Activated naive CD4-positive, alpha-beta T cell treated with anti-CD3 and anti-CD28 coated beads for 36 hours (primary cell): ENCODE measurements at regions of chr3 and their contacts with region 1.

Region 1: DNA sequence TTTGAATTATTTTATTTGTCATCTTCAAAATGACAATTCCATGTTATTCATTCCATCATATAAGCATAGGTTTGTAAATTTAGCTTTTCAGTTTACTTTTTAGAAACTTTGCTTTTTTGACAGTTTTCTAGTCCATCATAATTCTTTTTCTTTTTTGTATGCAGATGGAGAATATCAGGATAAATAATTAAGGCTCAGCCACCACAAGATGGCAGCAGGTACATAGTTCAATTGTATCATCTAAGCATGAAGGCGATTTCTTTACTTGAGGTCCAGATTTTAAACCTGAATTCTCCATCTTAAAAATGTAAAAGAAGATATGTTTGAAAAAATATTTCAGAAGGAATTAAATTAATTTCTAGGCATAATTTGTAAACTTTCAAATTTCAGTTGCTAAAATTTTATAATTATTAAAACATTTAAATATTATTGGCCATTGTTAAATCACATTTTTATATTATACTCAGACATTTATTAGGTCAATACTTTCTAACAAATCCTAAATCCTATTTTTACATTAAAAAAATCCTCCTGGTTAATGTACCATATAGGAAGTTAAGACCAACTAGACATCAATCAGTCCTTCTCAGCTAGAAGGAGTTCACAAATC is 15.1 kb downstream of the PLSCR5 start:
- DNase-seq: peak; percentile 49
- H3K4me3 Mint-ChIP-seq: no peak overlapping the region
- H3K27ac Mint-ChIP-seq: no peak overlapping the region
- H3K4me1 Mint-ChIP-seq: no peaks in the 10 kb centered on the region
- H3K27me3 Mint-ChIP-seq: peaks cover 6% of the 10 kb centered on the region

Region 2: GRCh38 chr3:146218880-146219866 is 370.8 kb before region 1 on chr3:
- CTCF ChIA-PET with region 1: interaction called, 3 read pairs
- intact Hi-C with region 1: loop called (anchors 1 kb)
- DNase-seq: peak; percentile 60
- H3K4me3 Mint-ChIP-seq: no peak overlapping the region
- H3K27ac Mint-ChIP-seq: no peak overlapping the region
- H3K4me1 Mint-ChIP-seq: no peaks in the 10 kb centered on the region
- H3K27me3 Mint-ChIP-seq: peaks cover 4% of the 10 kb centered on the region

Region 3: DNA sequence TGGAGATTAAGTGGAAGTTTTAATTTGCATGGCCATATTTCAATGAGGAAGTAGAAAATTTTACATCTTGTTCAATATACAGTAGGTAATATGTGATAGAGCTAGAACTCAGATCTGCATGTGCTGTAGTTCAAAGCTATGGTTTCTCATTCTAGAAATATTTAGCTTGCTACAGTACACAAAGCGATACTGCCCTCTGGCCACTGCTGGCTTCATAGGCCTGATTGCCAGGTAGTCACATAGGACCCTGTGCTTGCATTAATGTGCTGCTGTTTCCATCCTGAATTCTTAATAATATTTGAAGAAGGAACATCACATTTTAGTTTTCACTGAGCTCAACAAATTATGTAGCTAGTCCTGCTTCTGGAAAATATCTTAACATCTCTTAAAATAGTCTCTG is 207.6 kb before region 1 on chr3:
- CTCF ChIA-PET with region 1: no interaction called
- intact Hi-C with region 1: no loop called
- DNase-seq: peak; percentile 6
- H3K4me3 Mint-ChIP-seq: no peak overlapping the region
- H3K27ac Mint-ChIP-seq: no peak overlapping the region
- H3K4me1 Mint-ChIP-seq: no peaks in the 10 kb centered on the region
- H3K27me3 Mint-ChIP-seq: peaks cover 4% of the 10 kb centered on the region

Region 4: DNA sequence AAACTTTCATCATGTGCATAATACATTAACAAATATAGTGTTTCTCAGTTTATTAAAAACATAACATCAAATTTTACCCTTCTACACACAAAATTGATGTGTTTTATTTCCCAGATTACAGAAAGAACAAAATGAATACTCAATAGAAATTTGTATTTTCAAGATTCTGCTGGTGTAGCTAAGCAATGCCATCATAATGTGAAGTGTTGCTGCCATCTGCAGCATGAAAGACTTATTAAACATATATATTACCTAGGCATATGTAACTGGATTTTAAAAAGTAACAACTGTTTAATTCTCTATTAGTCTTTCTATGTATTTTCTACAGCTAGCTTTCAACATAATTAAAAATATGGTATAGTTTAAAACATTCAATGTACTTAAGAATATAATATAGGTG is 12.3 kb before region 1 on chr3:
- CTCF ChIA-PET with region 1: no interaction called
- intact Hi-C with region 1: no loop called
- DNase-seq: peak; percentile 56
- H3K4me3 Mint-ChIP-seq: no peak overlapping the region
- H3K27ac Mint-ChIP-seq: no peak overlapping the region
- H3K4me1 Mint-ChIP-seq: no peaks in the 10 kb centered on the region
- H3K27me3 Mint-ChIP-seq: no peaks in the 10 kb centered on the region

Region 5: DNA sequence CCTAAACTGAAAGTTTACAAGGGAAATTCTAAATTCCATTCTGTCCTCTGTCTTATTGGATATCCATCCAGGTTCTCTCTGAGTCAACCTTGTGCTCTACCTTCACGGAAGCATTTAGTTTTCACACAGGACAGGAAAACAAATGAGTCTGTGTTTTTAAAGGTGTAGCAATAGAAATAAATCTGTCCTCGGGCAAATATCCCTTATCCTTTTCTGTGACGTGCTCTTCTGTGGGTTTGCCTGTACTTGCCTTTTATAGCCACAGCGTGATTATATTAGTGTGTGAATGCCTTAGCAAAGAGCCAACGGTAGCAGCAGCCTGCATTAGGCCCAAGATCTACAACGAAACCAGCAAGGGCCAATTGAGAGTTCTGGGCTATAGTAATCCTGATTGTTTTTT is 142.3 kb after region 1 on chr3:
- CTCF ChIA-PET with region 1: no interaction called
- intact Hi-C with region 1: no loop called
- DNase-seq: no peak
- H3K4me3 Mint-ChIP-seq: no peak overlapping the region
- H3K27ac Mint-ChIP-seq: no peak overlapping the region
- H3K4me1 Mint-ChIP-seq: no peaks in the 10 kb centered on the region
- H3K27me3 Mint-ChIP-seq: no peaks in the 10 kb centered on the region

Region 6: GRCh38 chr3:147191795-147192385 is 601.9 kb after region 1 on chr3:
- CTCF ChIA-PET with region 1: no interaction called
- intact Hi-C with region 1: loop called (anchors 5 kb)
- DNase-seq: peak; percentile 4
- H3K4me3 Mint-ChIP-seq: no peak overlapping the region
- H3K27ac Mint-ChIP-seq: no peak overlapping the region
- H3K4me1 Mint-ChIP-seq: no peaks in the 10 kb centered on the region
- H3K27me3 Mint-ChIP-seq: no peaks in the 10 kb centered on the region

Region 7: DNA sequence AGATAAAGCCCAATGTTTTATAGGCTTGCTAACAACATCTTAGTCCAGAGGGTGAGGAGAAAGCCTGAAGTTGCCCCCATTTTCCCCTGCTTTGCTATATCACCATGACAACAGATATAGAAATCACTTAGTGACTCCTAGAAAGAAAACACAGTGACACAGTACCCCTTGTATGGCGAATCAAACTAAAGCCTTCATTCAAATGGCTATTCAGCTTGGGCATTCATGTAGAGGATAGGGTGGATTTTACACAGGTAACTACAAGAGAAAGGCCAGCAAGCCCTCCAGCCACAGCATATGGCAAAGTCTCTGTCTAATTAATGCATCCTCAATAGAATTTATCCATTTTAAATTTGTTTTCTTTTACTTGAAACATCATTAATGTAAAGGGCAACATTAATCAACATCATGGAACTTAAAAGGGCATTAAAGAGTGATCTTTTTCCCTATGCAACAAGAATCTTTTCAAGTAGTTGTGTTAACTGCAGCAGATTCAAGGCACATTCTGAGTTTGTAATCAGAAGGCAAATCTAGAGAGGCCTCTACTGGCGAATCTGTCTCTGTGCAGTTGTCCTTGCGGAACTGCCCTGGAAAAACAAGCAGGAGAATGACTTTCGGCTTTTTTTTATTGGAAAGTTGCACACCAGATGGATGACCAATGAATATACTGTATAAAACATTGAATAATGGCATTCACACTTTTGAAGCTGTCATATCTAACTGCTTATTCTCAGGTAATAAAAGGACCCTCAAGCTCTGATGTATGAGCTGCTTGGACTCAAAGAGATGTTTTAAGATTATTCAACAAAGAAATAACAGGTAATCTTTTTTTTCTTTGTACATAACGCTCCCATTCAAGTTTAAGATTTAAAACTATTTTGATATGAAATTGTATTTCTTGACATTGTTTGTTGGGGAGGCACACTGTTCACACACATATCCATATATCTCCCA is 1486.0 kb after region 1 on chr3:
- CTCF ChIA-PET with region 1: no interaction called
- intact Hi-C with region 1: loop called (anchors 5 kb)
- DNase-seq: no peak
- H3K4me3 Mint-ChIP-seq: no peak overlapping the region
- H3K27ac Mint-ChIP-seq: no peak overlapping the region
- H3K4me1 Mint-ChIP-seq: no peaks in the 10 kb centered on the region
- H3K27me3 Mint-ChIP-seq: no peaks in the 10 kb centered on the region